Caco-2 (cell line): ENCODE measurements at regions of chr15 and their contacts with region 1.

Region 1: DNA sequence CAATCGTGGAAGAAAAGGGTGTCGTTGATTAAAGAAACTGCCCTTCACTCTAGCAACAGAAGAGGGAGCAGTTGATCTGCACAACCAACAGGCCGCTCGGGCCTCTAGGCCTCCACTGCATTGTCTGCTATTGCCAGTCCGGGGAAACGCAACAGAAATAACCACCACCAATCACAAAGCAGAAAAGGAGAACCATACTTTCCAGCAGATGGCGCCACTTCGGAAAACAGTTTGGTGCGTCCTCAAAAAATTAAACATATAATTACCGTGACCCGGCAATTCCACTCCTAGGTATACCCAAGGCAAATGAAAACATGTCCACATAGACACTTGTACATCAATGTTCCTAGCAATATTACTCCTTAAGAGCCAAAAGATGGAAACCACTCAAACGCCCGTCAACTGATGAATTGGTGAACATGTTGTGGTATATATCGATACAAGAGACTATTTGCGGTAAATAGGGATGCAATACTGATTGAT is 154.1 kb downstream of the TJP1 start:
- DNase-seq: peak; percentile 88 to 91
- H3K4me3 ChIP-seq: no peak overlapping the region
- H3K4me3 Mint-ChIP-seq: no peak overlapping the region
- H3K27ac Mint-ChIP-seq: no peak overlapping the region
- H3K4me1 ChIP-seq: peaks cover 8% of the 10 kb centered on the region
- H3K4me1 Mint-ChIP-seq: no peaks in the 10 kb centered on the region
- H3K27me3 ChIP-seq: no peaks in the 10 kb centered on the region
- H3K27me3 Mint-ChIP-seq: peaks cover 4% of the 10 kb centered on the region
- CTCF ChIP-seq: peak; percentile 84 to 89

Region 2: DNA sequence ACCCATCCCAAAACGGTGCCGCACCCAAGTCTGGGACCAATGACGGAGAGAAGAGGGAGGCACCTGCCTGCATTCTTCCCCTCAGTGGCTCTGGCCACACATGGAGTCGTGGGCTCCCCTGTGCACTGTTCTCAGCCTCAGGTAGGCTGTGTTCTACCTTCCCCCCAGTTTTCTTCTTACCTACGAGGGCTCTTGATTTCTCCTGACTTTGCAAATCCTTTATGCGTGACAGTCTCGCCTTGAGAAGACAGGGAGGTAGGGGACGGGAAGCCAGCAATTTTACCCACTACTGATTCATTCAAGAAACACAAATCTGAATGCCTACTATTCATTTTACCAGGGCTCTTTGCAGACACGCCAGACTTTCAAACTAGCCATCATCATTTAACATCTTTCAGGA is 137.2 kb before region 1 on chr15:
- CTCF ChIA-PET with region 1: no interaction called
- POLR2A ChIA-PET with region 1: no interaction called
- intact Hi-C with region 1: no loop called
- DNase-seq: no peak
- H3K4me3 ChIP-seq: no peak overlapping the region
- H3K4me3 Mint-ChIP-seq: no peak overlapping the region
- H3K27ac Mint-ChIP-seq: no peak overlapping the region
- H3K4me1 ChIP-seq: peaks cover 18% of the 10 kb centered on the region
- H3K4me1 Mint-ChIP-seq: no peaks in the 10 kb centered on the region
- H3K27me3 ChIP-seq: no peaks in the 10 kb centered on the region
- H3K27me3 Mint-ChIP-seq: no peaks in the 10 kb centered on the region
- CTCF ChIP-seq: no peak

Region 3: GRCh38 chr15:29680465-29681165 is 12.5 kb after region 1 on chr15:
- CTCF ChIA-PET with region 1: no interaction called
- POLR2A ChIA-PET with region 1: no interaction called
- intact Hi-C with region 1: loop called (anchors 1 kb)
- DNase-seq: peak in 1 of 2 experiments; percentile 25
- H3K4me3 ChIP-seq: no peak overlapping the region
- H3K4me3 Mint-ChIP-seq: no peak overlapping the region
- H3K27ac Mint-ChIP-seq: no peak overlapping the region
- H3K4me1 ChIP-seq: no peaks in the 10 kb centered on the region
- H3K4me1 Mint-ChIP-seq: no peaks in the 10 kb centered on the region
- H3K27me3 ChIP-seq: no peaks in the 10 kb centered on the region
- H3K27me3 Mint-ChIP-seq: no peaks in the 10 kb centered on the region
- CTCF ChIP-seq: no peak

Region 4: DNA sequence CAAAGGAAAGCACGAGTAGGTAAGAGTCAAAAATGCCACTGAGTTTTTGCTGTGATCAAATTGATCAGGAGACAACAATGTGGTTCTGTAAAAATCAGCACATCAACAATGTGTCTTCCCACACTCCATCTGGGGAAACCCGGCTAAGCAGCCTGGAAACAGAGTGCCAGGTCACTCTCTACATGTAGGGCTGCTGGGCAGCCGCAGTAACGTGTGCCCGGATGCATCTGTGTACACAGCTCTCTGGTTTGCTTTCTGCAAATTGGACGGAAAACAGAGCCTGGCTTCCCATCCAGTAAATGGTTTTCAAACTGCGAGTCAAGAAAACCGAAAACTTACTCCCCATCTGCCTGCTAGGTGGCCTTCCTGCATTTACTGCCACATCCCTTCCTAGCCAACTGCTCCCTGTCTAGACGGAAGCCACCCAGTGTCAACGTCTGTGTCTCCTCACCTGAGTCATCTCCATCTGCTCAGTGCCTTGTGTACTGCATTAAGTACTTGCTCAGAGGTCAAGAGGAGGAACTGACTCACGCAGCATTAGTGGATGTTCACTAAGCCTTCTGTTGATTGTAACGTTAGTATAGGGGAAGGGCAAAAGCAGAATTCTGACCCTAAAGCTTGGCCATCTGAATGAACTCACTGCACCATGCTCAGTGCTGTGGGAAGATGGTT is 30.0 kb after region 1 on chr15:
- CTCF ChIA-PET with region 1: no interaction called
- POLR2A ChIA-PET with region 1: no interaction called
- intact Hi-C with region 1: loop called (anchors 1 kb)
- DNase-seq: peak; percentile 54 to 62
- H3K4me3 ChIP-seq: no peak overlapping the region
- H3K4me3 Mint-ChIP-seq: peak overlapping the region; percentile 25
- H3K27ac Mint-ChIP-seq: peak overlapping the region; percentile 62
- H3K4me1 ChIP-seq: peaks cover 6% of the 10 kb centered on the region
- H3K4me1 Mint-ChIP-seq: peaks cover 22% of the 10 kb centered on the region
- H3K27me3 ChIP-seq: no peaks in the 10 kb centered on the region
- H3K27me3 Mint-ChIP-seq: no peaks in the 10 kb centered on the region
- CTCF ChIP-seq: no peak

Region 5: DNA sequence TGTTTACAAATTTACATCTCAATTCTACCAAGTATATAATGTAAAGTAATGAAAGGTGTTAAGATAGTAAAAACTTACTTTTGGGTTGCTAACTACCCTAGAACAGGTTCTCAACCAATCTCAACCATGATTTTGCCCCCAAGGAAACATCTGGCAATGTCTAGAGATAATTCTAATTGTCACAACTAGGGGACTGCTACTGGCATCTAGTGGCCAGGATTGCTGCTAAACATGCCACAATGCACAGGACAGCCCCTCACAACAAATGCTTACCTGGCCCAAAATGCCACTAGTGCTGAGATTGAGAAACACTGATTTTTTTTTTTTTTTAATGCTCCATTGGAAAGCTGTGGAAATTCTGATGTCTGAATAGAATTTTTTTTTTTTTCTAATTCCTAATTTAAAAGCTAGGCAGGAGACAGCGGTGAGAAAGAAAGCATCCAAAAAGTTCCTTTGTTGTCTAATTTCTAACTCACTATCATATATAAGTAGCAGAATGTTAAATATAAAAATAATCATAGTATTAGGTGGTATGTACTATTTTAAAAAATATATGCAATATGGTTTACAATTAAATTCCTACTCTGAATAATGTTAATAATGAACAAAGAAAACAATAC is 72.6 kb after region 1 on chr15:
- CTCF ChIA-PET with region 1: no interaction called
- POLR2A ChIA-PET with region 1: no interaction called
- intact Hi-C with region 1: loop called (anchors 1 kb)
- DNase-seq: peak; percentile 42 to 44
- H3K4me3 ChIP-seq: no peak overlapping the region
- H3K4me3 Mint-ChIP-seq: no peak overlapping the region
- H3K27ac Mint-ChIP-seq: no peak overlapping the region
- H3K4me1 ChIP-seq: peaks cover 30% of the 10 kb centered on the region
- H3K4me1 Mint-ChIP-seq: peaks cover 23% of the 10 kb centered on the region
- H3K27me3 ChIP-seq: no peaks in the 10 kb centered on the region
- H3K27me3 Mint-ChIP-seq: no peaks in the 10 kb centered on the region
- CTCF ChIP-seq: peak in 1 of 2 experiments; percentile 60

Region 6: DNA sequence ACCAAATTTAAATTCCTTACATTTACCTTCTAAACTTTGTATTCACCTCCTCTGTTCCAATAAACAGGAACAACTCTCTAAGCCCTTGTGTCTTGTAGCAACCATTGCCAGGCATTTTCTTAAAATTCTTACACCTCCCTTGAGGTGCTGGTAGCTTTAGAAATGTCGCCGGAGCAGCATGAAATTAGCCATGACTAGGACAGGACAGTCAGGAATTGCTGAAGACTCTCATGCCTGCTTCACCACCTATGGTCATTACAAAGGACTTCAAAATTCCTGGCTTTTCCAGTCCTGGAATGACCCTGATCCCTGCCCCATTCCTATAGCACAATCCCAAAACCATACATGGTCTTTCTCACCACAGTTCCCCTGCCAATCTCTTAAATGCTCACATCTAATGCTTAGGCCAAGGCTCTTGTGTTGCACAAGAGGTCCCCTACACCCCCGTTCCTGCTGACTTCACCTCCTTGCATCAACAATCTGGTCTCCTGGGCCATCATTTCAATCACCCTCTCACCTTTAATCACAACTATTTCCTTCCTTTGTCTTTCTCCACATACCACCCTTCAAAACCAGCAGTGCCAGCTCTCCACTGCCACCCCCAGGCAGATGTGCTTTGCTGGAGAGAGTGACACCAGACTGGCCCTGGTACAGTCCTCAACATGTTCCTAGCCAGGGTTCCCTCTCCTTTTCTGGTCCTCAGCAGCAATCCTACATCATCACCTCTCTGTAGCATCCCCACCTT is 267.3 kb after region 1 on chr15:
- CTCF ChIA-PET with region 1: no interaction called
- POLR2A ChIA-PET with region 1: no interaction called
- intact Hi-C with region 1: loop called (anchors 1 kb)
- DNase-seq: peak in 1 of 2 experiments; percentile 41
- H3K4me3 ChIP-seq: no peak overlapping the region
- H3K4me3 Mint-ChIP-seq: no peak overlapping the region
- H3K27ac Mint-ChIP-seq: peak overlapping the region; percentile 4
- H3K4me1 ChIP-seq: peaks cover 20% of the 10 kb centered on the region; the same call in 1 of the 2 replicates
- H3K4me1 Mint-ChIP-seq: peaks cover 17% of the 10 kb centered on the region
- H3K27me3 ChIP-seq: no peaks in the 10 kb centered on the region
- H3K27me3 Mint-ChIP-seq: no peaks in the 10 kb centered on the region
- CTCF ChIP-seq: peak; percentile 31 to 35

Region 7: DNA sequence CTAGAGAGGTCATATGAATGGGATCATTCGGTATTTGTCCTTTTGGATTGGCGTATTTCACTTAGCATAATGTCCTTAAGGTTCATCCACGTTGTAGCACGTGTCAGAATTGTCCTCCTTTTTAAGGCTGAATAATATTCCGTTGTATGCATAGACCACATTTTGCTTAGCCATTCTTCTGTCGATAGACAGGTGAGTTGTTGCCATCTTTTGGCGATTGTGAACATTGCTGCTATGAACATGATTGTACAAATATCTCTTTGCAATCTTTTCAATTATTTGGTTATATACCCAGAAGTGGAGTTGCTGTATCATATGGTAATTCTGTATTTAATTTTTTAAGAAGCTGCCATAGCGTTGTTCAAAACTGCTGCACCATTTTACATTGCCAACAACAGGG is 362.2 kb after region 1 on chr15:
- CTCF ChIA-PET with region 1: no interaction called
- POLR2A ChIA-PET with region 1: no interaction called
- intact Hi-C with region 1: loop called (anchors 1 kb)
- DNase-seq: peak in 1 of 2 experiments; percentile 11
- H3K4me3 ChIP-seq: no peak overlapping the region
- H3K4me3 Mint-ChIP-seq: no peak overlapping the region
- H3K27ac Mint-ChIP-seq: no peak overlapping the region
- H3K4me1 ChIP-seq: no peaks in the 10 kb centered on the region
- H3K4me1 Mint-ChIP-seq: no peaks in the 10 kb centered on the region
- H3K27me3 ChIP-seq: no peaks in the 10 kb centered on the region
- H3K27me3 Mint-ChIP-seq: peaks cover 9% of the 10 kb centered on the region
- CTCF ChIP-seq: peak; percentile 22 to 39

Region 8: GRCh38 chr15:31292391-31293015 is 1624.3 kb after region 1 on chr15:
- CTCF ChIA-PET with region 1: no interaction called
- POLR2A ChIA-PET with region 1: no interaction called
- intact Hi-C with region 1: no loop called
- DNase-seq: no peak
- H3K4me3 ChIP-seq: no peak overlapping the region
- H3K4me3 Mint-ChIP-seq: no peak overlapping the region
- H3K27ac Mint-ChIP-seq: no peak overlapping the region
- H3K4me1 ChIP-seq: peaks cover 22% of the 10 kb centered on the region
- H3K4me1 Mint-ChIP-seq: peaks cover 23% of the 10 kb centered on the region
- H3K27me3 ChIP-seq: no peaks in the 10 kb centered on the region
- H3K27me3 Mint-ChIP-seq: peaks cover 14% of the 10 kb centered on the region
- CTCF ChIP-seq: no peak